ENCODE measurements at regions of chr21 and their contacts with region 1.

Region 1: DNA sequence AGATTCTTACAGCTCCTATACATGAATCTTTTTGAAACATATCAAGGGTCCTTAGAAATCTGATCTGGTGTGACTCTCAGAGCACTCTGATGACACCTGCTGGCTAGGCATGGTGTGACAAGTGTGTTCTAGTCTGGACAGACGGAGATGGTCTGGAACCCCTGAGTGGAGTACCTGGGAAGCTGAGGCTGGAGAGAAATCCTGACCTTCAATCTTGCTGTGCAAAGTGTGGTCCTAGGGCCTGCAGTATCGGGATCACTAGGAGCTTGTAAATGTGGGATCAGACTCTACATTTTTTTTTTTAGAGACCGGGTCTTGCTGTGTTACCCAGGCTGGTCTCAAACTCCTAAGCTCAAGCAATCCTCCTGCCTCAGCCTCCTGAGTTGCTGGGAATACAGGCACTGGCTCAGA is 78.6 kb upstream of the SOD1 start:
- DNase-seq: peak; percentile 87
- ATAC-seq: peak; percentile 85
- H3K4me3 Mint-ChIP-seq: no peak overlapping the region
- H3K27ac Mint-ChIP-seq: no peak overlapping the region
- H3K4me1 Mint-ChIP-seq: no peaks in the 10 kb centered on the region
- H3K27me3 Mint-ChIP-seq: peaks cover 3% of the 10 kb centered on the region

Region 2: DNA sequence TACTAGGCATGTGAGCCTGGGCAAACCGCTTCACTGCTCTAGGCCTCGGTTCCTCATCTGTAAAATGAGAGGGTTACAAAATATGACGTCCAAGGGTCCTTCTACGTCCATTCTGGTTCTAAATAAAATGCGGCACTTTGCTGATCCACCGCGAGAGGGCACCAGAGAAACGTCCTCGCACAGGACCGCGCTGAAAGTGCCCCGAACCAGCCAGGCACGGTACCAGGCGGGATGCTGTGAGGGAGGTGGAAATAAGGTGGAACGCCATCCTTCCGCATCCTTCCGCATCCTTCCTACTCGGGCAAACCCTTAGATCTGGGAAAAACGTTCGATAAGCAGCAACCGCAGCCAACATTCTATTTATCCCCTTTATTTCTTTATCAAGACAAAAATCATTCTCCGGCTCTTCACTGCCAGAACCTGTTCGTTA is 482.3 kb before region 1 on chr21:
- CTCF ChIA-PET with region 1: interaction called, 25 read pairs
- POLR2A ChIA-PET with region 1: no interaction called
- intact Hi-C with region 1: loop called (anchors 1 to 2 kb)
- DNase-seq: peak; percentile 86
- ATAC-seq: peak; percentile 89
- H3K4me3 Mint-ChIP-seq: no peak overlapping the region
- H3K27ac Mint-ChIP-seq: peak overlapping the region; percentile 38
- H3K4me1 Mint-ChIP-seq: peaks cover 21% of the 10 kb centered on the region
- H3K27me3 Mint-ChIP-seq: peaks cover 3% of the 10 kb centered on the region

Region 3: DNA sequence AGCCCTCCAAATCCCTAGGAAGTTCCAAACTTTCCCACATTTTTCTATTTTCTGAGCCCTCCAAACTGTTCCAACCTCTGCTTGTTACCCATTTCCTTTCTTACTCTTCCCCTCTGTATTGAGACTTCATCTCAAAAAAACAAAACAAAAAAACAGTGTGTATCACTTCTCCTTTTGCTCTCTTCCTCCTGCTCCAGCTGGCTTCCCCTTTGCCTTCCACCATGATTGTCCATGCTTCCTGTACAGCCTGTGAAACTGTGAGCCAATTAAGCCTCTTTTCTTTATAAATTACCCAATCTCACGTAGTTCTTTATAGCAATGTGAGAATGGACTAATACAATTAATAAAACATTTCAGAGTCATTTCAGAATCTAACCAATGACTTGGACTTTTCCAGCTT is 473.0 kb before region 1 on chr21:
- CTCF ChIA-PET with region 1: interaction called, 25 read pairs
- POLR2A ChIA-PET with region 1: no interaction called
- intact Hi-C with region 1: no loop called
- DNase-seq: no peak
- ATAC-seq: no peak
- H3K4me3 Mint-ChIP-seq: no peak overlapping the region
- H3K27ac Mint-ChIP-seq: no peak overlapping the region
- H3K4me1 Mint-ChIP-seq: peaks cover 26% of the 10 kb centered on the region
- H3K27me3 Mint-ChIP-seq: no peaks in the 10 kb centered on the region

Region 4: GRCh38 chr21:31594727-31595126 is 13.9 kb after region 1 on chr21:
- CTCF ChIA-PET with region 1: interaction called, 11 read pairs
- POLR2A ChIA-PET with region 1: no interaction called
- intact Hi-C with region 1: no loop called
- DNase-seq: no peak
- ATAC-seq: no peak
- H3K4me3 Mint-ChIP-seq: no peak overlapping the region
- H3K27ac Mint-ChIP-seq: no peak overlapping the region
- H3K4me1 Mint-ChIP-seq: no peaks in the 10 kb centered on the region
- H3K27me3 Mint-ChIP-seq: peaks cover 2% of the 10 kb centered on the region

Region 5: GRCh38 chr21:31604591-31605190 is 23.8 kb after region 1 on chr21:
- CTCF ChIA-PET with region 1: interaction called, 7 read pairs
- POLR2A ChIA-PET with region 1: no interaction called
- intact Hi-C with region 1: loop called in 1 of 2 experiments (anchors 2 kb)
- DNase-seq: peak; percentile 87
- ATAC-seq: peak; percentile 80
- H3K4me3 Mint-ChIP-seq: no peak overlapping the region
- H3K27ac Mint-ChIP-seq: no peak overlapping the region
- H3K4me1 Mint-ChIP-seq: peaks cover 10% of the 10 kb centered on the region
- H3K27me3 Mint-ChIP-seq: no peaks in the 10 kb centered on the region

Measured in activated CD4-positive, alpha-beta T cell treated with anti-CD3 and anti-CD28 coated beads for 36 hours (primary cell).